H1 (cell line): ENCODE measurements at regions of chr3 and their contacts with region 1.

Region 1: DNA sequence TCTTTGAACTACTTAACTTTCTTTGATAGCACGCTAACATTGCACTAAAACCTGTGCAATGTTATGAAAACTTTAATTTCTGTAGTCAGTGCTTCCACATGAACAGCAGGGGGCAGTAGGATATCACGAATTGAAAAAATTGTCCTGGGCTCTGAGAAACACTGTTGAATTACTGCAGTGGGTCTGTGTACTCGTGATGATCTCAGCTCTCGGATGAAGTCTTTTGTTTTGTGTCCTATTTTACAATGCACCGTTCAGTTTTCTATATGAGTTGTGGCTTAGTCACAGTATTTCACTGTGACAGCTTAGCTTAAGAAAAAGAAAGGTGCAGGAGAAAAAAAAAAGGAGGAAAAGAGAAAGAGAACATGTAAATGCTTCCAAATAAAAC is 141.3 kb upstream of the CCDC54 start:
- DNase-seq: no peak
- H3K4me3 ChIP-seq: no peak overlapping the region
- H3K27ac ChIP-seq: no peak overlapping the region
- H3K4me1 ChIP-seq: peaks cover 0 to 3% (median 0%) of the 10 kb centered on the region in 4 experiments; a peak in 1 of 7 replicates
- H3K27me3 ChIP-seq: peaks cover 0 to 3% (median 1%) of the 10 kb centered on the region in 4 experiments; a peak in 4 of 7 replicates
- CTCF ChIP-seq: peak in 2 of 3 experiments; percentile 72 to 75; a peak in 3 of 4 replicates
- EP300 ChIP-seq: no peak
- POLR2A ChIP-seq: no peak
- RAD21 ChIP-seq: peak; percentile 97

Region 2: GRCh38 chr3:107218864-107219269 is 17.1 kb before region 1 on chr3:
- CTCF ChIA-PET with region 1: interaction called, 15 read pairs
- POLR2A ChIA-PET with region 1: no interaction called
- DNase-seq: no peak
- H3K4me3 ChIP-seq: no peak overlapping the region
- H3K27ac ChIP-seq: no peak overlapping the region
- H3K4me1 ChIP-seq: no peaks in the 10 kb centered on the region
- H3K27me3 ChIP-seq: no peaks in the 10 kb centered on the region
- CTCF ChIP-seq: no peak
- EP300 ChIP-seq: no peak
- POLR2A ChIP-seq: no peak
- RAD21 ChIP-seq: no peak

Region 3: GRCh38 chr3:107271787-107272387 is 36.0 kb after region 1 on chr3:
- CTCF ChIA-PET with region 1: interaction called, 66 read pairs
- POLR2A ChIA-PET with region 1: no interaction called
- DNase-seq: no peak
- H3K4me3 ChIP-seq: no peak overlapping the region
- H3K27ac ChIP-seq: no peak overlapping the region
- H3K4me1 ChIP-seq: no peaks in the 10 kb centered on the region
- H3K27me3 ChIP-seq: no peaks in the 10 kb centered on the region; a peak in 1 of 7 replicates
- CTCF ChIP-seq: peak in 2 of 3 experiments; percentile 30 to 67; a peak in 2 of 4 replicates
- EP300 ChIP-seq: no peak
- POLR2A ChIP-seq: no peak
- RAD21 ChIP-seq: peak; percentile 71 to 78

Region 4: GRCh38 chr3:107414325-107414964 is 178.5 kb after region 1 on chr3:
- CTCF ChIA-PET with region 1: interaction called, 10 read pairs
- POLR2A ChIA-PET with region 1: no interaction called
- DNase-seq: no peak
- H3K4me3 ChIP-seq: no peak overlapping the region
- H3K27ac ChIP-seq: no peak overlapping the region
- H3K4me1 ChIP-seq: no peaks in the 10 kb centered on the region
- H3K27me3 ChIP-seq: no peaks in the 10 kb centered on the region
- CTCF ChIP-seq: no peak
- EP300 ChIP-seq: no peak
- POLR2A ChIP-seq: no peak
- RAD21 ChIP-seq: no peak

Region 5: DNA sequence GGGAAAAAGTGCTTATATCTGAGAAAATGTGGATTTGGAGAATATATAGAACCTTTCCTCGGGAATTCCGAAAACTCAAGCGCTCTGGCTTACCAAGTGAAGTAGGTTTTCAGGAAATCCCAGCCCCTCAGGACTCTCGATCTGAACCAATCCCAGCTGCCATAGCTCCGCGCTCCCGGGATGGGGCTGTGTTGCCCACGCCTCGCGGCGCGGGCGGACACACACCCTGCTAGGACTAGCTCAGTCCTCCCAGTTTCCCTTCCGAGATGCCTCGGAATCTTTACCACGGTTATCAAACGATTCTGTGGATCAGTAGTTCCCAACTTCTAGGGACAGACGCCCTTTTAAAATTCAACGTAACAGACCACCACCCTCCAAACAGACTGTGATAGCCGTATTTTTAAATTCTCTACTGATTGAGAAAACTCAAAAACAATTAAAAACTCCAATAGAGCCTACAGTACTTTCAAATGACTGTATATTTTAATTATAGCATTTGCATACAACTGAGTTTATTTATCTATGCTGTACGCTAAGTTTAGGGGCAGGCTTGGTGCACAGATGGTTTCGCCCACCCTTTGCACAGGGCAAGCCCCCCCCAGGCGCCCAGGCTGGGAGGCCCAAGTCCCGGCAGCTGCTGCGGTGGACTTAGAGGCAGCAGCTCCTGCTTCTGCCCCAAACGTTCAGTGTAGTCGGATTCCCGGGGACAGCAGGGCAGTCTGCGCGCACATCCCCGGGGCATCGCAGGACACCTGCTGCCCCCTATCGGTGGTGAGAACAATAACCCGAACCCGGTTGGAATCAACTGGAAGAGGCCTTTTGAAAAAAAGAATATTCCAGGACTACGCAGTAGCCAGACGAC is 193.6 kb after region 1 on chr3:
- CTCF ChIA-PET with region 1: interaction called, 31 read pairs
- POLR2A ChIA-PET with region 1: interaction called, 4 read pairs
- DNase-seq: peak; percentile 68 to 81
- H3K4me3 ChIP-seq: peak overlapping the region; percentile 37 to 76 (median 73)
- H3K27ac ChIP-seq: no peak overlapping the region
- H3K4me1 ChIP-seq: peaks cover 0 to 7% (median 5%) of the 10 kb centered on the region in 4 experiments; a peak in 5 of 7 replicates
- H3K27me3 ChIP-seq: peaks cover 0 to 17% (median 12%) of the 10 kb centered on the region in 4 experiments; a peak in 6 of 7 replicates
- CTCF ChIP-seq: peak; percentile 78 to 86 (median 86)
- EP300 ChIP-seq: no peak
- POLR2A ChIP-seq: 0 out of 3 replicates have a peak, but pooled peaks of 1 of the 2 experiments have one; percentile 41
- RAD21 ChIP-seq: peak; percentile 76 to 82

Region 6: GRCh38 chr3:107543666-107544065 is 307.7 kb after region 1 on chr3:
- CTCF ChIA-PET with region 1: interaction called, 12 read pairs
- POLR2A ChIA-PET with region 1: no interaction called
- DNase-seq: no peak
- H3K4me3 ChIP-seq: no peak overlapping the region
- H3K27ac ChIP-seq: no peak overlapping the region
- H3K4me1 ChIP-seq: peaks cover 0 to 5% (median 3%) of the 10 kb centered on the region in 4 experiments; a peak in 2 of 7 replicates
- H3K27me3 ChIP-seq: no peaks in the 10 kb centered on the region
- CTCF ChIP-seq: peak in 2 of 3 experiments; percentile 20 to 25; a peak in 2 of 4 replicates
- EP300 ChIP-seq: no peak
- POLR2A ChIP-seq: no peak
- RAD21 ChIP-seq: peak; percentile 58 to 60